ENCODE measurements at regions of chr10 and their contacts with region 1.

Region 1: GRCh38 chr10:54402576-54402975 is 398.5 kb downstream of the PCDH15 start:
- DNase-seq: peak in 16 of 42 donors; percentile 10 to 66 (median 26)

Region 2: DNA sequence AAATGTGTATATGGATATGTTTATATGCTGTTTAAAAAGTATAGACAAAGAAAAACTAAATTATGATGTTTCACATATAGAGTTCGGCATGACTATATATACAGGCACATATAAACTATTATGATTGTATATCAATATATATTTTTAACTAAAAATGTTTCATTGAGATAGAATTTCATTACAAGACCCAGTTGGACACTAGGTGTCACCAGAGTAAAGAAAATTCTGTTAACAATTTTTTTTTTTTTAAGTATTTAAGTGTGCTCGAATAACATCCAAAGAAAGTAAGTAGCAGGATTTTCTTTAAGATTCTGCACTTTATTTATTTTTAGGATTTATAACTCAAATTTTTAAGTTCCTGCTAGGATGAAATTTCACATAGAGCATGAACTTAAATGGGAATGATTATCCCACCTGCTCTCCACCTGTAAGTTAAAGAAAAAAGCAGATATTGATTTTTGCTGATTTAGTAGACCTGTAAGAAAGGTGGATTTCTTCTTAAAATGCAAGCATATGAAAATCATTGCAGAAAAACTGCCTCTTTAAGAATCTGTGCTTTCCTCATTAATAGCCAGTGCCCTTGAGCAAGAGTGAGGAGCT is 563.0 kb before region 1 on chr10:
- intact Hi-C with region 1: loop called (anchors 5 kb)
- DNase-seq: no peak